PC-3 (cell line): ENCODE measurements at regions of chr10 and their contacts with region 1.

Region 1: GRCh38 chr10:79195091-79195923 is 126.5 kb downstream of the ZMIZ1 start:
- DNase-seq: peak; percentile 100
- ATAC-seq: peak; percentile 80
- H3K4me3 ChIP-seq: no peak overlapping the region
- H3K27ac ChIP-seq: no peak overlapping the region
- H3K4me1 ChIP-seq: peaks cover 28% of the 10 kb centered on the region
- H3K27me3 ChIP-seq: no peaks in the 10 kb centered on the region
- CTCF ChIP-seq: peak; percentile 100

Region 2: DNA sequence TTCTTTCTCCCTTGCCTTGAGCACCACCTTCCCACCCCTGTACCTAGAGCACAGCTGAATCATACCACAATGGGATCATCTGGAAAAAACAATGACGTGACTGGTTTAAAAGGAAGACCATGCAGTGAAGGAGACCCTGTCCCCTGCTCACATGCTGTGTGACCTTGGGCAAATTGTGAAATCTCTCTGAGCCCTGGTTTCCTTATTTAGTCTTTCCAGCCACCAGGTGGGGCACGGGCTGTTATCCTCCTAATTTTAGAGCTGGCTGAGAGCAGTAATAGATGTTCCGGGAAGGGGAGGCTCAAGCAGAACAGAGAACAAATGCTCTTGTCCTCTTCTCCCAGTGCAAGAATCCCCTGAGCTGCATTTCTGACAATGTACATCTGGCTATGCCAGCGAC is 963.4 kb before region 1 on chr10:
- CTCF ChIA-PET with region 1: interaction called, 4 read pairs
- POLR2A ChIA-PET with region 1: no interaction called
- intact Hi-C with region 1: loop called (anchors 5 kb)
- DNase-seq: peak; percentile 79
- ATAC-seq: peak; percentile 71
- H3K4me3 ChIP-seq: no peak overlapping the region
- H3K27ac ChIP-seq: no peak overlapping the region
- H3K4me1 ChIP-seq: no peaks in the 10 kb centered on the region
- H3K27me3 ChIP-seq: peaks cover 71% of the 10 kb centered on the region
- CTCF ChIP-seq: peak; percentile 96

Region 3: DNA sequence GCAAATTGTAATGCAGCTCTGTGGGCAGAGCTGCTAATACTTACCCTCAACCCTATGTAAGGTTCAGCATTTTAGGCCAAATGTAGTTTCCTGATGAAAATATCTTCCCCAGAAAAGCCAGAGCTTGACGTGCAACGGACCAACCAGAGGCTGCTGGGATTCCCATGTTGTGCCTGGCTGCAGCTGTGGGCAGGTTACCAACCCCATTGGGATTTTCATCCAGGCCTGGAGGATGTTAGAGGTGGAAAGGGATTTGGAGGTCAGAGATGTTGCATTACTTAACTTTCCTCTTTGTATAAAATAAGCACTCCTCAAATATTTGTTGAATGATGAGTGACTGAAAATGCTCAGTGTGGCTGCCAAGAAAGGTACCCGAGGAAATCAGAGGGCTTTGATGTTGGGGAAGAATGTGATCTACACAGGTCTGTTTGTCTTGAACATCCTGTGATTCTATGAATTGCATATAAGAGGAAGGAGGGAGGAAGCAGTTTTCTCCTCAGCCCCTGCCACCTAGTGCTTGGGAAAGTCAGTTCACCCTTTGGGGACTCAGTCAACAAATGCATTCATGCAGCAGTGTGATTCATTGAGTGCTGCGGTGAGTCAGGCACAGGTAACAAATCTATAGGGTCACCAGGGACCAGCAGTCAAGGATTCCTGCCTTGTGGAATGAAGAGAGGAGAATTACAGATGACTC is 674.4 kb before region 1 on chr10:
- CTCF ChIA-PET with region 1: no interaction called
- POLR2A ChIA-PET with region 1: interaction called, 4 read pairs
- intact Hi-C with region 1: loop called (anchors 5 kb)
- DNase-seq: peak; percentile 100
- ATAC-seq: peak; percentile 100
- H3K4me3 ChIP-seq: no peak overlapping the region
- H3K27ac ChIP-seq: peak overlapping the region; percentile 42
- H3K4me1 ChIP-seq: peaks cover 31% of the 10 kb centered on the region
- H3K27me3 ChIP-seq: no peaks in the 10 kb centered on the region
- CTCF ChIP-seq: peak; percentile 99

Region 4: DNA sequence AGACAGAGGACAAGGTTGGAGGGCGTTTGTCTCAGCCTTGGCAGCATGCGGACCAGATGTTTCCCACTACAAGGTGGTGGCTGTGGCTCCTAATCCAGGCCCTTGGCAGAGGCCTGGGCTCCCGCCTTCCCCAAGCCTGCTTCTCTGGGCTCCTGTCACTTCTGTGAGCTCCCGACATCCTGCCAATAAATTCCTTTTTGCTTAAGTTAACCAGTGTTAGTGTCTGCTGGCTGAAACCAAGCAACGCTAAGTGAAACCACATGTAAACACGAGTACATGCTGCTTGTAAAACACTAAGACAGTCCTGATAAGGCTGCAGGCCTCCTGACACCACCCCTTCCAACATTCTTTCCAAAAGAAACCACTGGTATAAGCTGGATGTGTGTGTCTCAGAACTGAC is 390.1 kb before region 1 on chr10:
- CTCF ChIA-PET with region 1: interaction called, 3 read pairs
- POLR2A ChIA-PET with region 1: no interaction called
- intact Hi-C with region 1: loop called (anchors 2 kb)
- DNase-seq: peak; percentile 100
- ATAC-seq: peak; percentile 90
- H3K4me3 ChIP-seq: no peak overlapping the region
- H3K27ac ChIP-seq: peak overlapping the region; percentile 40
- H3K4me1 ChIP-seq: peaks cover 59% of the 10 kb centered on the region
- H3K27me3 ChIP-seq: no peaks in the 10 kb centered on the region
- CTCF ChIP-seq: no peak

Region 5: GRCh38 chr10:78991187-78991586 is 204.1 kb before region 1 on chr10:
- CTCF ChIA-PET with region 1: interaction called, 3 read pairs
- POLR2A ChIA-PET with region 1: no interaction called
- intact Hi-C with region 1: loop called (anchors 1 kb)
- DNase-seq: peak; percentile 100
- ATAC-seq: peak; percentile 97
- H3K4me3 ChIP-seq: 0 out of 2 replicates have a peak overlapping the region, but pooled peaks have one; percentile 0
- H3K27ac ChIP-seq: peak overlapping the region; percentile 36
- H3K4me1 ChIP-seq: peaks cover 19% of the 10 kb centered on the region
- H3K27me3 ChIP-seq: no peaks in the 10 kb centered on the region
- CTCF ChIP-seq: no peak; the same call in 1 of the 2 replicates

Region 6: DNA sequence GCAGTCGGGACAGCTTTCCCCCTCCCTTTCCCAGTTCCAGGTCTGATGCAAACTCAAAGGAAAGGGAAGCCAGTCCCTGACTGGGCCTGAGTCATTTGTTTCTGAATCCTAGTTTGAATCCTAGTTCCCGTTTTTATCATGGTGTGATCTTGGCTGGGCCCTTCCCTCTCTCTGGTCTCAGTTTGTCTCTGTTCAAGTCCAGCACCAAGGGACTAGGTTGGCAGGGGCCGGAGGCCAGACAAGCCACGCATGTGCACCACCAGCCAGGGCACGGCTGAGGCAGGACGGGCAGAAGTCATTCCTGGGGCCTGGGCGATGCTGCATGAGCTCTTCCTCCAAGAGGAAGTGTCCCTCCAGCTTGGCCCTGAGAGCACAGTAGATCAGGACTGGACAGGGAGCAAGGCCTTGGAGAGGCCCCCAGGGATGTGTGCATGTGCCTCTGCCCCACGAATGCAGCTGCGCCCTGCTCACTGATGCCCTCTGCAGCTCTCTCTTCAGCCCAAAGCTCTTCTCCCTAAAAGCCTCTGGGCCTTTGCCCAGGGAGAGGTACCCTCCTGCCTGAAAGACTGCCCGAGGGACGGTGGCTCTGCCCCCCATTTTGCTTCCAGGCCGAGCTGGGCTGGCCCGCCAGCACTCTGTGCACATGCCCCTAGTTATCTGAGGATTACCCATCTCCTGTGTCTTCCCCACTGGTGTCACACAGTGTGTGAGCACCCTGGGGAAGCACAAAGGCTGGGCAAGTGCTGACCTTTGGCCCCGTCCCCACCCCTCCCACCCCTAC is 39.8 kb before region 1 on chr10:
- CTCF ChIA-PET with region 1: interaction called, 22 read pairs
- POLR2A ChIA-PET with region 1: interaction called, 8 read pairs
- intact Hi-C with region 1: loop called (anchors 1 kb)
- DNase-seq: peak; percentile 93
- ATAC-seq: no peak
- H3K4me3 ChIP-seq: no peak overlapping the region
- H3K27ac ChIP-seq: peak overlapping the region; percentile 47
- H3K4me1 ChIP-seq: peaks cover 82% of the 10 kb centered on the region
- H3K27me3 ChIP-seq: no peaks in the 10 kb centered on the region
- CTCF ChIP-seq: no peak

Region 7: GRCh38 chr10:79209831-79210230 is 14.5 kb after region 1 on chr10:
- CTCF ChIA-PET with region 1: no interaction called
- POLR2A ChIA-PET with region 1: no interaction called
- intact Hi-C with region 1: no loop called
- DNase-seq: no peak
- ATAC-seq: no peak
- H3K4me3 ChIP-seq: no peak overlapping the region
- H3K27ac ChIP-seq: no peak overlapping the region
- H3K4me1 ChIP-seq: no peaks in the 10 kb centered on the region
- H3K27me3 ChIP-seq: no peaks in the 10 kb centered on the region
- CTCF ChIP-seq: no peak